ENCODE measurements at regions of chr10 and their contacts with region 1.

Region 1: GRCh38 chr10:94315024-94315451 is 47.7 kb downstream of the NOC3L start:
- DNase-seq: no peak

Region 2: GRCh38 chr10:93916257-93917063 is 398.6 kb before region 1 on chr10:
- intact Hi-C with region 1: loop called (anchors 10 kb)
- DNase-seq: no peak

Region 3: DNA sequence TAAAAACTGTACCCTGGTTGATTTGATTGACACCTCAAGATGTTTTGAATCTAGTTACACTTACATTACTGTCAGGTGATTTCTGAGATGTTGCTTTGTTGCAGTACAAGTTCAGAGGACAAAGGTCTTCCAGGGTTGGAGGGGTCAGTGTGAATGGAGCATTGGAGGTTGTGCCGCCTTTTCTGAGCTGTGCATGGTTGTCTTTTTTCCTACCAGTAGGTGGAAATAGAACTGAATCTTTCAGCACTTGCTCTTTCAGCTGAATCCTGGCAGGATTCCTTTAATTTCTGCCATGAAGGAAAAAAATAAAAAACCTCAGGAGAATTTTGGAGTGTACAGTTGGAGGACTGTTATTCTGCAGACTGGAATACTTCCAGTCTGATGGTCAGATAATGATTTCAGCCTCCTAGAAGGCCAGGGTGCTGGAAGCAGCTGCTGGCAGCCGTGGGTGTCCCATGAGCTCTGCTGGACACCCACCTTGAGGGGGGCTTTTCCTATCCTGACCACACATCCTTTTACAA is 238.7 kb before region 1 on chr10:
- intact Hi-C with region 1: loop called (anchors 10 kb)
- DNase-seq: peak in 4 of 42 donors; percentile 8 to 26 (median 8)

Region 4: DNA sequence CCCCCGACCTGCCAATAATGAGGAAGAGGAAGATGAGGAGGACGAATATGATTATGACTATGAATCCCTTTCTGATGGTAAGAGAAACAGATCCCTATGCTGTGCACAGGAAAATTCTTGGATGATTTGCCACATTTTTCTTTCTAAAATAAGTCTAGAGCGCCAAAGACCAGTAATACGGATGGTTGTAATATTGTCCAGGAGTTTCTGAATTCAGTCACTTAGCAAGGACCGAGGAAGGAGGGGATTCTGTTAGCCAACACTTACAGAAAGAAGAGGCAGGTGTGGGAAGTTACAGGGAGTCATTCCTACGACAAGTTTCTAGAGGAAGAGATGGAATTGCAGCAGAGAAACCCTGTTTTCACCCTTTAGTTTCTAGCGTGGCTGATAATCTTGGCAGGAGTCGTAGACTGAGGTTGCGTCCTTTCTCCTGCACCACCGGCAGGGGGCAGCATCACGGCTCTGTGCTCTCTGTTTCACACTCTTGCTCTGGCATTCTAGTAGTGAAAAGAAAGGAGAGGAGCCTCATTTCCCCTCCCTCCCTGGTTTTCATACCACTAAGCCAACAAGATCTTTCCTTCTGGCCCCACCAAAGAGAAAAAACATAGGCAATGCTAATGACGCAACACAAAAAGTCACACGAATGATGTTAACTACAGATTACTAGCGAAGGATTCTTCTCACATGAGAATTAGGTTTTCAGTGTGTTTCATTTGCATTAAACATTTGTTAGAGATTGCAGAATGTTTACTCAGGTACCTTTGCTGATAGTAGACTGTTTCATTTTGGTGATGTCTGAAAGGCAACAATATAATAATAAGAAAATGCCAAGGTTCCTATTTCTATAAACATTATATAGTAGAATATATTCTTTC is 35.0 kb before region 1 on chr10:
- intact Hi-C with region 1: no loop called
- DNase-seq: peak in 37 of 42 donors; percentile 8 to 80 (median 52)

Measured in head of caudate nucleus (tissue), 42 donors.